Heart left ventricle (tissue), 16 donors: ENCODE measurements at regions of chr13 and their contacts with region 1.

Region 1: GRCh38 chr13:25286969-25287961 is at the start of gene MTMR6:
- DNase-seq: peak; percentile 91 to 97 (median 93)
- ATAC-seq: peak; percentile 93 to 99 (median 98)
- H3K4me3 ChIP-seq: peak within 1 kb of the TSS; percentile 67 to 98 (median 90)
- H3K27ac ChIP-seq: peak within 1 kb of the TSS; percentile 57 to 97 (median 83)
- H3K4me1 ChIP-seq: peaks cover 0 to 47% (median 11%) of the 10 kb centered on the region in 12 donors
- H3K27me3 ChIP-seq: peaks cover 0 to 5% (median 0%) of the 10 kb centered on the region in 9 donors
- CTCF ChIP-seq: peak; percentile 100
- POLR2A ChIP-seq: peak in 1 of 2 donors; percentile 48
- total RNA-seq, gene MTMR6: 15.6 to 21.5 (median 17.6) TPM

Region 2: DNA sequence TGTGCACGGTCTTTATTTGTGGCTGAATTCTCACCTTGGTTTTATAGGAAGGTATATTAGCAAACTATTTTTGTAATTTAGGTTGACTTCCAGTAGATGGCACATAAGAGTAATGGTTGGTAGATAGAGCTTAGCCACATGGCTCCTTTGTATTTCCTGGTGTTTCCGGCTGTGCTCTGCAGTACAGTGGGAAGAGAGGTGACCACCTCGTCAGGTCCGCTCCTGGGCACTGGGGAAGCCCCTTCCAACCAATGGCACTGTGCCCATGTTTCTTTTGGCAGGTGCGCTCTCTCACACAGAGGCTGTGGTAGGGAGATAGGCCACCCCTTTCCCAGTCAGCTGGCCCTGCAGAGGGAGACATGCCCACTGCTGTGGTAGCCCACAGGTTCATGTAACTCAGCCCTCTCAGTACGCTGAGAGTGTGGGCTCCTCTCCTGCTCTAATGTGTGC is 681.3 kb before region 1 on chr13:
- intact Hi-C with region 1: no loop called
- DNase-seq: no peak
- ATAC-seq: no peak
- H3K4me3 ChIP-seq: no peak overlapping the region
- H3K27ac ChIP-seq: no peak overlapping the region
- H3K4me1 ChIP-seq: no peaks in the 10 kb centered on the region
- H3K27me3 ChIP-seq: no peaks in the 10 kb centered on the region
- CTCF ChIP-seq: peak in 1 of 12 donors; percentile 11
- POLR2A ChIP-seq: no peak

Region 3: GRCh38 chr13:24878340-24878739 is 408.9 kb before region 1 on chr13:
- intact Hi-C with region 1: no loop called
- DNase-seq: no peak
- ATAC-seq: no peak
- H3K4me3 ChIP-seq: no peak overlapping the region
- H3K27ac ChIP-seq: no peak overlapping the region
- H3K4me1 ChIP-seq: no peaks in the 10 kb centered on the region
- H3K27me3 ChIP-seq: peaks cover 0 to 22% (median 0%) of the 10 kb centered on the region in 9 donors
- CTCF ChIP-seq: no peak
- POLR2A ChIP-seq: no peak

Region 4: GRCh38 chr13:25301347-25302047 is 14.2 kb after region 1 on chr13 and contains the start of gene NUP58:
- intact Hi-C with region 1: loop called in 2 of 10 experiments (anchors 2 kb)
- DNase-seq: peak; percentile 95 to 98 (median 96)
- ATAC-seq: peak; percentile 100
- H3K4me3 ChIP-seq: peak within 1 kb of the TSS; percentile 65 to 95 (median 82)
- H3K27ac ChIP-seq: peak within 1 kb of the TSS; percentile 74 to 97 (median 88)
- H3K4me1 ChIP-seq: peaks cover 0 to 40% (median 13%) of the 10 kb centered on the region in 12 donors
- H3K27me3 ChIP-seq: peaks cover 0 to 7% (median 0%) of the 10 kb centered on the region in 9 donors
- CTCF ChIP-seq: no peak
- POLR2A ChIP-seq: peak in 1 of 2 donors; percentile 84
- total RNA-seq, gene NUP58: 18.3 to 39.1 (median 24.4) TPM

Region 5: DNA sequence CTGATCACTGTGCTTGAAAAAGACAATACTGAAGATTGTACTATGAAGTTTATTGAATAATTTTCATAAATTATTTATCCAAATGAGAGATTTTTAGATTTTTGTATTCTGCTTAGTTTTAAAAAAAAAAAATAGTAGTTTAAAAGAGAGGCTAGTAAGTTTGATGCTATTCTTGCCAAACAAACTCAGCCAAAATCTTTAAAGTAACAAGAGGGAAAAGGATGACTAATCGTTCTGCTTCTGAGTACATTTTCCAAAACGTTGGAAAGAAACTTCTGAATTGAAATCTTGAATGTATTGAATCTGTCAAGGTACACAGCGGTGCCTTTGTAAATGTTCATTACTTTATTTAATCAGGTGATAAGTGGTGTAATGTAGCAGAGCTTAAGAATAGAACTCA is 48.6 kb after region 1 on chr13:
- intact Hi-C with region 1: no loop called
- DNase-seq: no peak
- ATAC-seq: no peak
- H3K4me3 ChIP-seq: no peak overlapping the region
- H3K27ac ChIP-seq: no peak overlapping the region
- H3K4me1 ChIP-seq: no peaks in the 10 kb centered on the region
- H3K27me3 ChIP-seq: no peaks in the 10 kb centered on the region
- CTCF ChIP-seq: no peak
- POLR2A ChIP-seq: no peak

Region 6: GRCh38 chr13:25347151-25347550 is 59.9 kb after region 1 on chr13:
- intact Hi-C with region 1: no loop called
- DNase-seq: no peak
- ATAC-seq: no peak
- H3K4me3 ChIP-seq: no peak overlapping the region
- H3K27ac ChIP-seq: no peak overlapping the region
- H3K4me1 ChIP-seq: no peaks in the 10 kb centered on the region
- H3K27me3 ChIP-seq: peaks cover 0 to 1% (median 0%) of the 10 kb centered on the region in 9 donors
- CTCF ChIP-seq: no peak
- POLR2A ChIP-seq: no peak